CD4-positive, alpha-beta memory T cell (primary cell): ENCODE measurements at regions of chr1 and their contacts with region 1.

Region 1: DNA sequence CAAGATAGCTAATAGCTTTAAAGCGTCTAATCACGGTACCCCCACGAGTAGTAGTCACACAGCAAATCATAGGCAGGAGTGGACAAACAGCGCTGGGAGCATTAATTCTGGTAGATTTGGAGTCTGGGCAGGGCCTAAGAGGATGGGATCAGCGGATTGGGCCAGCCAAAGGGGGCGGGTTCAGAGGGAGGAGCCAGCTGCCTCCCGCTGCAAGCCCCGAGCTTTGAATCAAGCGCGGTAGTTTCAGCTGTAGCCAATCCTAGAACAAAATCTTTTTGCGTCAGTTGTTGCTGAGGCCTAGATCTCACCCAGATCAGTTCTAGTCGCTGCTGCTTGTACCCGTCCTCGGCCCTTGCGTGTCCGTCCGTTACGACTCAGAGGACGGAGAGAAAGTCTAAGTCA is 576 bp upstream of the NASP start:
- DNase-seq: peak; percentile 95 to 97 (median 96)
- H3K4me3 ChIP-seq: peak overlapping the region; percentile 99
- H3K4me3 Mint-ChIP-seq: peak overlapping the region; percentile 93 to 100 (median 100)
- H3K27ac ChIP-seq: peak overlapping the region; percentile 88
- H3K27ac Mint-ChIP-seq: peak overlapping the region; percentile 94 to 100 (median 99)
- H3K4me1 ChIP-seq: peaks cover 26% of the 10 kb centered on the region
- H3K4me1 Mint-ChIP-seq: peaks cover 20 to 42% (median 28%) of the 10 kb centered on the region in 4 donors
- H3K27me3 ChIP-seq: no peaks in the 10 kb centered on the region
- H3K27me3 Mint-ChIP-seq: no peaks in the 10 kb centered on the region

Region 2: GRCh38 chr1:44739361-44740178 is 843.7 kb before region 1 on chr1 and contains the start of gene KIF2C:
- CTCF ChIA-PET with region 1: no interaction called
- POLR2A ChIA-PET with region 1: no interaction called
- intact Hi-C with region 1: loop called (anchors 5 kb)
- DNase-seq: peak; percentile 93 to 96 (median 95)
- H3K4me3 ChIP-seq: peak within 1 kb of the TSS; percentile 78 to 82
- H3K4me3 Mint-ChIP-seq: peak within 1 kb of the TSS; percentile 92 to 98 (median 95)
- H3K27ac ChIP-seq: peak within 1 kb of the TSS; percentile 79
- H3K27ac Mint-ChIP-seq: peak within 1 kb of the TSS; percentile 95 to 97 (median 96)
- H3K4me1 ChIP-seq: peaks cover 15% of the 10 kb centered on the region
- H3K4me1 Mint-ChIP-seq: peaks cover 5 to 26% (median 15%) of the 10 kb centered on the region in 4 donors
- H3K27me3 ChIP-seq: no peaks in the 10 kb centered on the region
- H3K27me3 Mint-ChIP-seq: no peaks in the 10 kb centered on the region
- total RNA-seq, gene KIF2C: 1.4 to 1.5 TPM

Region 3: GRCh38 chr1:45499415-45499769 is 83.9 kb before region 1 on chr1:
- CTCF ChIA-PET with region 1: interaction called, 3 read pairs
- POLR2A ChIA-PET with region 1: interaction called, 40 read pairs
- intact Hi-C with region 1: loop called (anchors 1 kb)
- DNase-seq: peak in 1 of 5 donors; percentile 4
- H3K4me3 ChIP-seq: peak overlapping the region; percentile 62 to 88
- H3K4me3 Mint-ChIP-seq: peak overlapping the region; percentile 91 to 96 (median 95)
- H3K27ac ChIP-seq: peak overlapping the region; percentile 62
- H3K27ac Mint-ChIP-seq: peak overlapping the region; percentile 81 to 98 (median 96)
- H3K4me1 ChIP-seq: peaks cover 18% of the 10 kb centered on the region
- H3K4me1 Mint-ChIP-seq: peaks cover 31 to 34% (median 31%) of the 10 kb centered on the region in 4 donors
- H3K27me3 ChIP-seq: no peaks in the 10 kb centered on the region
- H3K27me3 Mint-ChIP-seq: no peaks in the 10 kb centered on the region

Region 4: GRCh38 chr1:45550401-45551351 is 32.6 kb before region 1 on chr1 and contains the start of gene AKR1A1:
- CTCF ChIA-PET with region 1: interaction called, 4 read pairs
- POLR2A ChIA-PET with region 1: interaction called, 20 read pairs
- intact Hi-C with region 1: loop called (anchors 1 kb)
- DNase-seq: peak; percentile 86 to 89 (median 88)
- H3K4me3 ChIP-seq: peak within 1 kb of the TSS; percentile 82 to 87
- H3K4me3 Mint-ChIP-seq: peak within 1 kb of the TSS; percentile 95 to 98 (median 96)
- H3K27ac ChIP-seq: peak within 1 kb of the TSS; percentile 79
- H3K27ac Mint-ChIP-seq: peak within 1 kb of the TSS; percentile 92 to 98 (median 97)
- H3K4me1 ChIP-seq: peaks cover 23% of the 10 kb centered on the region
- H3K4me1 Mint-ChIP-seq: peaks cover 14 to 31% (median 22%) of the 10 kb centered on the region in 4 donors
- H3K27me3 ChIP-seq: no peaks in the 10 kb centered on the region
- H3K27me3 Mint-ChIP-seq: no peaks in the 10 kb centered on the region
- total RNA-seq, gene AKR1A1: 84.3 to 89.8 TPM

Region 5: GRCh38 chr1:46303038-46303871 is 720.0 kb after region 1 on chr1 and contains the starts of genes LRRC41 and UQCRH:
- CTCF ChIA-PET with region 1: no interaction called
- POLR2A ChIA-PET with region 1: no interaction called
- intact Hi-C with region 1: loop called (anchors 5 kb)
- DNase-seq: peak; percentile 94 to 96 (median 94)
- H3K4me3 ChIP-seq: peak within 1 kb of the TSS; percentile 73 to 90
- H3K4me3 Mint-ChIP-seq: peak within 1 kb of the TSS; percentile 96 to 100 (median 98)
- H3K27ac ChIP-seq: peak within 1 kb of the TSS; percentile 94
- H3K27ac Mint-ChIP-seq: peak within 1 kb of the TSS; percentile 97 to 98 (median 98)
- H3K4me1 ChIP-seq: peaks cover 54% of the 10 kb centered on the region
- H3K4me1 Mint-ChIP-seq: peaks cover 26 to 64% (median 40%) of the 10 kb centered on the region in 4 donors
- H3K27me3 ChIP-seq: no peaks in the 10 kb centered on the region
- H3K27me3 Mint-ChIP-seq: no peaks in the 10 kb centered on the region
- total RNA-seq, gene LRRC41: 31.8 to 32.0 TPM
- total RNA-seq, gene UQCRH: 123 to 128 TPM